Dorsolateral prefrontal cortex (tissue), 120 donors: ENCODE measurements at regions of chr9 and their contacts with region 1.

Region 1: GRCh38 chr9:71911253-71912074 is at the start of gene C9orf85:
- DNase-seq: peak; percentile 99 to 100 (median 100)
- H3K4me3 ChIP-seq: peak within 1 kb of the TSS; percentile 69 to 100 (median 91)
- H3K27ac ChIP-seq: peak within 1 kb of the TSS; percentile 79 to 99 (median 96)
- H3K27me3 ChIP-seq: no peaks in the 10 kb centered on the region
- CTCF ChIP-seq: peak in 15 of 56 donors; percentile 3 to 43 (median 18)
- total RNA-seq, gene C9orf85: 8.0 to 26.8 (median 14.8) TPM

Region 2: GRCh38 chr9:71768388-71769174 is 142.9 kb before region 1 on chr9 and contains the start of gene CEMIP2:
- intact Hi-C with region 1: loop called in 1 of 2 experiments (anchors 5 kb)
- DNase-seq: peak; percentile 72 to 93 (median 86)
- H3K4me3 ChIP-seq: peak within 1 kb of the TSS; percentile 71 to 97 (median 88)
- H3K27ac ChIP-seq: peak within 1 kb of the TSS in 58 of 59 donors; percentile 77 to 98 (median 92)
- H3K27me3 ChIP-seq: no peaks in the 10 kb centered on the region
- CTCF ChIP-seq: peak in 50 of 56 donors; percentile 16 to 74 (median 52)
- total RNA-seq, gene CEMIP2: 20.5 to 81.8 (median 47.2) TPM

Region 3: DNA sequence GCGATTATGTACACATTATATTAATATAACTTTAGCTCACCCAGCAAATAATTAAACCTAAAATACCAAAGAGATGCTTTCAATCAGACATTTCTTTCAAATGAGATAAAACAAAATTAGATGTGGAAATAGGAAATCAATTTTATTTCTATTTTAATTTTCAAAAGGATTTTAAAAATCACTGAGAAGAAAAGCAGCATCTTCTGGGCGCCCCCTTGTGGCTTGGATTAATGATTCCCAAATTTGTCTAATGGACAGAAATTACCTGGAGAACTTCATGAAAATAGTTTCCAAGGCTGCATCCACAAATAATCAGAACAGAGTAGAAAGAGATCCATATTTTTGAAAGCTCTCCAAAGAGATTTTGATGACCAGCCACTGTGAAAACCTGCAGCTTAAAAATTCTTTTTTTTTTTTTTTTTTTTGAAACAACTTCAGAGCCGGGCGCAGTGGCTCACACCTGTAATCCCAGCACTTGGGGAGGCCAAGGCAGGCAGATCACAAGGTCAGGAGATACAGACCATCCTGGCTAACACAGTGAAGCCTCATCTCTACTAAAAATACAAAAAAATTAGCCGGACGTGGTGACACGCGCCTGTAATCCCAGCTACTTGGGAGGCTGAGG is 92.2 kb before region 1 on chr9:
- intact Hi-C with region 1: loop called in 1 of 2 experiments (anchors 5 kb)
- DNase-seq: peak in 3 of 10 donors; percentile 17 to 43 (median 38)
- H3K4me3 ChIP-seq: no peak overlapping the region
- H3K27ac ChIP-seq: no peak overlapping the region
- H3K27me3 ChIP-seq: no peaks in the 10 kb centered on the region
- CTCF ChIP-seq: peak; percentile 62 to 94 (median 80)

Region 4: GRCh38 chr9:71853084-71853483 is 58.4 kb before region 1 on chr9:
- intact Hi-C with region 1: no loop called
- DNase-seq: no peak
- H3K4me3 ChIP-seq: no peak overlapping the region
- H3K27ac ChIP-seq: no peak overlapping the region
- H3K27me3 ChIP-seq: no peaks in the 10 kb centered on the region
- CTCF ChIP-seq: no peak

Region 5: DNA sequence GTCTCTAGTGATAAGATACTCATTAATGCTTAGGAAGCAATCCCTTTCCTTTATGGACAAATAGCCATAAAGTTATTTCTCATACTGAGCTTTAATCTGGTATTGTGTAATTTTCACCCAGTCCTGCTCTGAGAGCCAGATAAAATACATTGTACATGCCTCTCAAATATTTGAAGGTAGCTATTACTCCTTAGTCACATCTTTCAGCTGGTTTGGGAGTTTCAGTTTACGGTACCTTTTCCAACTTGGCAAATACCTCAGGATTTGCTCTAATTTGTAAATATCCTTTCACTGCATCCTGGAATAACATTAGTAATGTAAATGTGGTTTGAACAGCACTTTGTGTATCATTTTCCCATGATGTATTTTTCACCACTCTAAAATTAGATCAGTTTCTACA is 47.8 kb before region 1 on chr9:
- intact Hi-C with region 1: no loop called
- DNase-seq: no peak
- H3K4me3 ChIP-seq: no peak overlapping the region
- H3K27ac ChIP-seq: peak overlapping the region in 18 of 59 donors; percentile 0 to 57 (median 25)
- H3K27me3 ChIP-seq: no peaks in the 10 kb centered on the region
- CTCF ChIP-seq: no peak

Region 6: GRCh38 chr9:71937898-71938297 is 26.4 kb after region 1 on chr9:
- intact Hi-C with region 1: loop called in 1 of 2 experiments (anchors 2 kb)
- DNase-seq: no peak
- H3K4me3 ChIP-seq: peak overlapping the region in 45 of 59 donors; percentile 0 to 59 (median 28)
- H3K27ac ChIP-seq: peak overlapping the region; percentile 59 to 96 (median 90)
- H3K27me3 ChIP-seq: no peaks in the 10 kb centered on the region
- CTCF ChIP-seq: no peak

Region 7: DNA sequence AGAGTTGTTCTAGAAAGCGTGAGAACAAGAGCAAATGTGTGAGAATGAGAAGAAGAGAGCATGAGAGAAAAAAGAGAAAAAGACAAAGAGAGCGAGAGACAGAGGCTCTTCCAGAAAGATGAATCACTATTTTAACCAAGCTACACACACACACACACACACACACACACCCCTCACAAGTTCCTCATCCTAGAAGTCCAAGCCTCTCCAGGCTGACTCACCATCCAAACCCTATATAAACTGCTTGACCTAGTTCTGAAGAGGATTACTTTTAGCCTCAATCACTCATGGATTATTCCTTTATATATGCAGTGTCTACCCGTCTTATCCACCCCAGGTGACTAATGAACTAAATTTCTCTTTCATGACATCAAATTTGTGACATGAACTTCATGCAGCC is 111.4 kb after region 1 on chr9:
- intact Hi-C with region 1: loop called (anchors 5 to 10 kb)
- DNase-seq: peak in 1 of 10 donors; percentile 36
- H3K4me3 ChIP-seq: no peak overlapping the region
- H3K27ac ChIP-seq: peak overlapping the region in 2 of 59 donors; percentile 55 to 59
- H3K27me3 ChIP-seq: no peaks in the 10 kb centered on the region
- CTCF ChIP-seq: no peak

Region 8: GRCh38 chr9:72048850-72049249 is 137.4 kb after region 1 on chr9:
- intact Hi-C with region 1: no loop called
- DNase-seq: no peak
- H3K4me3 ChIP-seq: no peak overlapping the region
- H3K27ac ChIP-seq: no peak overlapping the region
- H3K27me3 ChIP-seq: no peaks in the 10 kb centered on the region
- CTCF ChIP-seq: no peak